ENCODE measurements at regions of chr11 and their contacts with region 1.

Region 1: DNA sequence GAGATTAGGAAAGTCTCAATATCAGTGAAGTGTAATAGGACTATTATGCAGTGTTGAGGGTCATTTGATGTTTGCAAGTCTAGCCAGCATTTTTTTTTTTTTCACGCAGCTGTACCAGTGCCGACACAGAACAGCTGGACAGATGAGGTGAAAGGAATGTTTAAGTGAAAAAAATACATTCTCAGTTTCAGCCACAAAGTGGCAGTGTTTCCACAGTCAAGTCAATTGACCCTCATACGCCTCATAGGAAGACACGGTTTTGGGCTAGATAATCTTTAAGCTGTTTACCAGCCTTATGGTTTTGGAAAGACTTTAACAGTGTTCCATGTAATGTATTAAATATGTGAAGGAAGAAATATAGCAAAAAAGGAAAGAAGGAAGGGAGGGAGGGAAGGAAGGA is 349.9 kb upstream of the ANO3 start:
- DNase-seq: no peak
- ATAC-seq: peak; percentile 67 to 73
- H3K4me3 ChIP-seq: no peak overlapping the region
- H3K27ac ChIP-seq: no peak overlapping the region
- H3K4me1 ChIP-seq: no peaks in the 10 kb centered on the region
- H3K27me3 ChIP-seq: no peaks in the 10 kb centered on the region
- CTCF ChIP-seq: peak; percentile 48

Region 2: GRCh38 chr11:26227296-26227695 is 245.3 kb after region 1 on chr11:
- intact Hi-C with region 1: loop called (anchors 10 kb)
- DNase-seq: no peak
- ATAC-seq: peak; percentile 52 to 72
- H3K4me3 ChIP-seq: no peak overlapping the region
- H3K27ac ChIP-seq: no peak overlapping the region
- H3K4me1 ChIP-seq: no peaks in the 10 kb centered on the region
- H3K27me3 ChIP-seq: no peaks in the 10 kb centered on the region
- CTCF ChIP-seq: peak; percentile 54

Measured in lower lobe of right lung (tissue), 2 donors.